ENCODE measurements at regions of chr18 and their contacts with region 1.

Region 1: DNA sequence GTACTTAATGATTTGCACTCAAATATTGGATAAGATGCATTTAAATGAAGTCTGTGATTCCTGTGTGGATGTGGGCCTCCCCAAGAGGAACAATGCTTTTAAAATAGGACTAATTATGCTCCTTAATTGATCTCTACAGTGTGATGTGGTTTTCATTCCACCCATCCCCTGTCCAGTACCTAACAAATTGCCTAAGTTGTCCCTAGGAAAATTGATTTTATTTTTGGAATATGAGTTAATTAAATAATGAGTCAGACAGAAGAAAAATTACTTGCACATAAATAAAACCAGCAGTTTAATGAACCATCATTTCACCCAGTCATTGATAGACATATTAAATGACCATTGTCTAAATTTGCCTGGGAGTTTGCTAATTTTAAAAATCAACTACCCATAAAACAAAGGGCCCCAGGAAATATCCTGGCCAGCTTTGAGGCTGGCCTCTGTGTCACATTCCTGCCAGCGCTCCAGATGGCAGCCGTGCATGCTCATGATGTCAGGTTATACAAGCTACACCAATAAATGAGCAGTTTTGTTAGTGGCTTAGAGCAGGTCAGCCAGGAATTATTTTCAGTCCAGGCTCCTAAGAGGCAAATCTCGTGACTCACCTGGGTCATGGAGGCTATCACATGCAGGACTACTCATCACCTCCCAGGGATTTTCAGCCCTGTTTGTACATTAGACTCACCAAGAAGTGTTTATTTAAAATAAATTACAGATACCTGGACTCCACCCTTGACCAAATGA is 31.9 kb downstream of the ABHD3 start:
- DNase-seq: peak; percentile 79
- H3K4me3 Mint-ChIP-seq: no peak overlapping the region
- H3K27ac Mint-ChIP-seq: peak overlapping the region; percentile 69
- H3K4me1 Mint-ChIP-seq: peaks cover 59% of the 10 kb centered on the region
- H3K27me3 Mint-ChIP-seq: no peaks in the 10 kb centered on the region
- CTCF ChIP-seq: no peak

Region 2: DNA sequence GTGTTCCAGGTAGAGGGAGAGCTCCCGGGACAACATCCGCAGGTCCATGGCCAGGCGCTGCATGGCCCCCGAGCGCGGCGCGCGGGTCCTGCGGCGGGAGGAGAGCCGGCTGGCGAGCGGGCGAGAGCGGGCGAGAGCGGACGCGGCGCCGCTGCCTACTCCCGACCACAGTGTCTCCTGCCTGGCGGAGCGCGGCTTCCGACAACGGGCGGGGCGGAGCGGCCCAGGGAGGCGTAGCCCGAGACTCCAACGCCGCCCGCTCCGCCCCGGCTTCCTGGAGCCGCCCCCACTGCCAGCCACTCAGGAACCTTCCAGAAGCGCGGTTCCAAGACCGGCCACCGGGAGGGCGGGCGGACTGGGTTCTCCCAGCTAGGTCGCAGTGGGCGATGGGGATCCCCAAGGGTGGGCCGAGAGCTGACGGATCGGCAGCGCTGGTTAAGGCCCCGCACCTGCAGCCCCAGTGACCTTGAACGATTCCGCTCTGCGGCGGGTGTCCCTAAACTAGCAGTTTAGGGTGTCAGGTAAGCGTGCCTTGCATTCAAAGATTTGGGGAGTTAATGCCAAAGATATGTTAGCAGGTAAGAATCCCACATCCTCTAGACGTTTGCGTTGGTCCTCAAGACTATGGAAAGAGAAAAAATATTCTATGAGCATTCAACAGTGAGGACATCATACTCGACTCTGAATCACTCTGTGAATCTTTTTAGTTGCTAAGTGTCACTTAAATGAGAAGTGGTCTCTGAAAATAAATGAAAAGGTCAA is 32.1 kb after region 1 on chr18 and contains the start of gene ABHD3:
- CTCF ChIA-PET with region 1: no interaction called
- intact Hi-C with region 1: loop called (anchors 5 kb)
- DNase-seq: peak; percentile 93
- H3K4me3 Mint-ChIP-seq: peak within 1 kb of the TSS; percentile 88
- H3K27ac Mint-ChIP-seq: peak within 1 kb of the TSS; percentile 63
- H3K4me1 Mint-ChIP-seq: peaks cover 7% of the 10 kb centered on the region
- H3K27me3 Mint-ChIP-seq: no peaks in the 10 kb centered on the region
- CTCF ChIP-seq: peak; percentile 14
- total RNA-seq, gene ABHD3: 43.5 and 45.3 TPM in 2 replicates

Region 3: GRCh38 chr18:21740724-21741510 is 68.2 kb after region 1 on chr18 and contains the start of gene MIB1:
- CTCF ChIA-PET with region 1: no interaction called
- intact Hi-C with region 1: loop called (anchors 5 kb)
- DNase-seq: no peak
- H3K4me3 Mint-ChIP-seq: peak within 1 kb of the TSS; percentile 87
- H3K27ac Mint-ChIP-seq: peak within 1 kb of the TSS; percentile 92
- H3K4me1 Mint-ChIP-seq: no peaks in the 10 kb centered on the region
- H3K27me3 Mint-ChIP-seq: no peaks in the 10 kb centered on the region
- CTCF ChIP-seq: no peak
- total RNA-seq, gene MIB1: 33.6 and 35.2 TPM in 2 replicates